ENCODE measurements at regions of chr3 and their contacts with region 1.

Region 1: DNA sequence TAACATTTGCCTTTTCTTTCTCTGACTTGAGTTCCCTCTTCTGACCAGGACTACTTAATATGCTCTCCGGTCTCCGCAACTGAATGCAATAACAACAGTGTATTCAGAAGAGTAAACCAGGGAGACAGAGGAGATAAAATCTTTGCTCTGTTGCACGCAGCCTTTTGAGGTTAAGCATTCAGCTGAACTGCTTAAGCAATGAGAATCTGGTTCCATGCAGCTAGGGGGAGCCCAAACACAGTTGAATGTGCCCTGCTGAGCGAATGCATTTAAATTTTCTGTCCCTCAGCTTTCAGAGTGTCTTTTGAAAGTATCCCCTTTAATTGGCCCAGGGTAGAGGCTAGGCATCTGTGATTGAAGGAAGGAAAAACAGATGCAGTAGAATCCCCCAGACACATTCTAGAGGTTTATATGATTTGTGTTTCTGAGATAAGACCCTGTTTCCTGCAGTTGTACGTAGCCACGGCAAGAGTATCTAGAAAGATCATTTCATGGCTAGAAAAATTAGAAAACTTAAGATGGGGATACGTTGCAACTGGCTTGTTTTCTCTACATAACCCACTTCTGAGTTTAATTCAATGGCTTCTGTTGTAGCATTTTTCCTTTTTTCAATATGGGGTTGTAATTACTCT is 309.6 kb downstream of the TUSC7 start:
- DNase-seq: no peak
- H3K4me3 ChIP-seq: no peak overlapping the region
- H3K27ac ChIP-seq: no peak overlapping the region
- H3K4me1 ChIP-seq: peaks cover 0 to 4% (median 0%) of the 10 kb centered on the region in 4 donors
- H3K27me3 ChIP-seq: no peaks in the 10 kb centered on the region
- CTCF ChIP-seq: peak; percentile 65 to 77 (median 70)
- EP300 ChIP-seq: no peak
- POLR2A ChIP-seq: no peak

Region 2: GRCh38 chr3:116770815-116771450 is 248.3 kb before region 1 on chr3:
- intact Hi-C with region 1: loop called (anchors 5 kb)
- DNase-seq: no peak
- H3K4me3 ChIP-seq: no peak overlapping the region
- H3K27ac ChIP-seq: no peak overlapping the region
- H3K4me1 ChIP-seq: no peaks in the 10 kb centered on the region
- H3K27me3 ChIP-seq: no peaks in the 10 kb centered on the region
- CTCF ChIP-seq: peak; percentile 75 to 87 (median 79)
- EP300 ChIP-seq: no peak
- POLR2A ChIP-seq: no peak

Region 3: GRCh38 chr3:116958291-116958690 is 60.9 kb before region 1 on chr3:
- intact Hi-C with region 1: no loop called
- DNase-seq: no peak
- H3K4me3 ChIP-seq: no peak overlapping the region
- H3K27ac ChIP-seq: no peak overlapping the region
- H3K4me1 ChIP-seq: peaks cover 0 to 5% (median 0%) of the 10 kb centered on the region in 4 donors
- H3K27me3 ChIP-seq: no peaks in the 10 kb centered on the region
- CTCF ChIP-seq: no peak
- EP300 ChIP-seq: no peak
- POLR2A ChIP-seq: no peak

Region 4: DNA sequence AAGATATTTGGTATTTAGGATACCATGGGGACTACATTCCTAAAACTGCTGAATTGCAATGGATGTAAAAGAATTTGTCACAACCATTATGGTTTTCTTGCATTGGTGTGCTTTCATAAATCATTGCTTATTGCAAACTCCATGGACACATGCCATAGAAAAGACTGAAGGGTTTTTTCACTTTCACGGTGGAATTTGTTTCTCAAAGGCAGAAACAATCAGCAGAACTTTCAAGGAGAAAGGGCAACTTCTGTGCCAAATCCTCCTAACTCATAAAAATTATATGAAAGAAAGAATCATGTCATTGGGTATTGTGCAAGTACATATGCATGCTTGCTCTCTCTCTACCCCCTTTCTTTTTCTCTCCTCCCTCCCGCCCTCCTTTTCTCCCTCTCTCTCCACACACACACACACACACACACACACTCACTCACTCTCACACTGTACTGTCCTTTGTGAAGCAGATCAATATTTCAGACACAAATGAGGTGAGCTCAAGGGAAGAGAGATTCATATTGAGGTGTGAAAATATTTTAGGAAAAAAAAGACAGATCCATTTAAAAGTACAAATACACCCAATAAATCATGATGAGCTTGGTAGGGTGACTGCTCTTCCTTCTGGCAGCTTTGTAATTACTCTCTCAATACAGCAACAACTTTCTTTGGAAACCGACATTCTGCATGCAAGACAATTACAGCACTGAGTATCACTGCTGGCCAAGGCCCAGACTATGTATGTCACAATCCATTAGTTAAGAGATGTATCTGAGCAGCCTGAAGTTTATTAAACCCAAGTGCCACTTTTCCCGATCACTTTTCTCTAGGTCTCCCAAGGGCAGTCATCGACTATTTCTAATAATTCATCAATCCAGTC is 182.9 kb after region 1 on chr3:
- intact Hi-C with region 1: no loop called
- DNase-seq: no peak
- H3K4me3 ChIP-seq: no peak overlapping the region
- H3K27ac ChIP-seq: no peak overlapping the region
- H3K4me1 ChIP-seq: no peaks in the 10 kb centered on the region
- H3K27me3 ChIP-seq: no peaks in the 10 kb centered on the region
- CTCF ChIP-seq: no peak
- EP300 ChIP-seq: no peak
- POLR2A ChIP-seq: no peak

Region 5: DNA sequence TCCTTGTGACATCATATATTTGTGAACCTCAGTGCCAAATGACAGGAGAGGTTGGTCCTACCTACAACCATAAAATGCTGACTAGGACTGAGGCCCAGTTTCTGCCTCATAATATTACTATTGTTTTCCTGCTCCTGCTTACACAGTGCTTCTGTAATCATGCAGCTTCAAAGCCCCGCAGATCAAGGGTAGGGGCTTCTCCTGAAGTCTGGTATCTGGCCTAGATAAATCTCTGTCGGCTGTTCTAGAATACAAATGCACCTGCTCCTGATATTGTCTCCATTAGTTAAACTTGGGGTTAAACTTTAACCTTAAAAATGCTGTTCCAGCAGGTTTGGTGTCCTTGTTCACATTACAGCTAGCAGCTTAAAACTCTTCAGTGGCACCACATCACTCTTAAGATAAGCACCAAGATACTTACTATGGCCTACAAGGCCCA is 242.8 kb after region 1 on chr3:
- intact Hi-C with region 1: no loop called
- DNase-seq: no peak
- H3K4me3 ChIP-seq: no peak overlapping the region
- H3K27ac ChIP-seq: no peak overlapping the region
- H3K4me1 ChIP-seq: no peaks in the 10 kb centered on the region
- H3K27me3 ChIP-seq: no peaks in the 10 kb centered on the region
- CTCF ChIP-seq: no peak
- EP300 ChIP-seq: no peak
- POLR2A ChIP-seq: no peak

Region 6: GRCh38 chr3:117355566-117355965 is 336.4 kb after region 1 on chr3:
- intact Hi-C with region 1: loop called (anchors 10 kb)
- DNase-seq: no peak
- H3K4me3 ChIP-seq: no peak overlapping the region
- H3K27ac ChIP-seq: no peak overlapping the region
- H3K4me1 ChIP-seq: no peaks in the 10 kb centered on the region
- H3K27me3 ChIP-seq: no peaks in the 10 kb centered on the region
- CTCF ChIP-seq: peak in 2 of 3 experiments; percentile 15 to 31
- EP300 ChIP-seq: no peak
- POLR2A ChIP-seq: no peak

Region 7: DNA sequence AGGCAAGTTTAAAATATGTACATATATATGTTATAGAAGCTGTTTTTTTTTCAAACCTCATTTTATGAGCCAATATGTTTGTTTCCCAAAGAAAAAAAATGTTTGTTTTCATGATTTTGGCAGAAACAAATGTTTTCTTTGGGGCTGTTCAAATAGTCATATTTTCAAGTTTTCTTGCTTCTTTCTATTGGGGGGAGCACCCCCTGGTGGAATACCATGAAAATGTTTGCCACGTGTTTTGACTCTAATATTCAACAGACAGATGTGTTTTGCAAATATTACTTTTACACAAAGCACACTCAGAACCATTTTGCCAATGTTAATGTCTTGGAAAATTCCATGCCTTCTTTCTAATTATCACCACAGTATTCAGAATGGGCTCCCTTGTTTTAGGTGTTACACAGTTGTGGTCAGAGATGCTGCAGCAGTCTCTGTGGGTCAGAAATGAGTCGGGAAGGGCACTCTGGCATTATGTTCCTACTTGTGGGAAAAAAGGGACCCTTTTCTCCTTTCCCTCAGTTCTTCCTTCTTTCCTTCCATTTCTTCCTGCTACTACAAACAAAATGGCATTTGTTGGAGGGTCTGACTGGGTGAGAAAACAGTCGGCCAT is 507.4 kb after region 1 on chr3:
- intact Hi-C with region 1: loop called (anchors 5 kb)
- DNase-seq: no peak
- H3K4me3 ChIP-seq: no peak overlapping the region
- H3K27ac ChIP-seq: no peak overlapping the region
- H3K4me1 ChIP-seq: peaks cover 0 to 8% (median 5%) of the 10 kb centered on the region in 4 donors
- H3K27me3 ChIP-seq: no peaks in the 10 kb centered on the region
- CTCF ChIP-seq: peak; percentile 20 to 51 (median 46)
- EP300 ChIP-seq: no peak
- POLR2A ChIP-seq: no peak

Region 8: GRCh38 chr3:117719316-117719926 is 700.2 kb after region 1 on chr3:
- intact Hi-C with region 1: loop called (anchors 10 kb)
- DNase-seq: no peak
- H3K4me3 ChIP-seq: no peak overlapping the region
- H3K27ac ChIP-seq: no peak overlapping the region
- H3K4me1 ChIP-seq: no peaks in the 10 kb centered on the region
- H3K27me3 ChIP-seq: no peaks in the 10 kb centered on the region
- CTCF ChIP-seq: peak; percentile 44 to 74 (median 60)
- EP300 ChIP-seq: no peak
- POLR2A ChIP-seq: no peak

Region 9: DNA sequence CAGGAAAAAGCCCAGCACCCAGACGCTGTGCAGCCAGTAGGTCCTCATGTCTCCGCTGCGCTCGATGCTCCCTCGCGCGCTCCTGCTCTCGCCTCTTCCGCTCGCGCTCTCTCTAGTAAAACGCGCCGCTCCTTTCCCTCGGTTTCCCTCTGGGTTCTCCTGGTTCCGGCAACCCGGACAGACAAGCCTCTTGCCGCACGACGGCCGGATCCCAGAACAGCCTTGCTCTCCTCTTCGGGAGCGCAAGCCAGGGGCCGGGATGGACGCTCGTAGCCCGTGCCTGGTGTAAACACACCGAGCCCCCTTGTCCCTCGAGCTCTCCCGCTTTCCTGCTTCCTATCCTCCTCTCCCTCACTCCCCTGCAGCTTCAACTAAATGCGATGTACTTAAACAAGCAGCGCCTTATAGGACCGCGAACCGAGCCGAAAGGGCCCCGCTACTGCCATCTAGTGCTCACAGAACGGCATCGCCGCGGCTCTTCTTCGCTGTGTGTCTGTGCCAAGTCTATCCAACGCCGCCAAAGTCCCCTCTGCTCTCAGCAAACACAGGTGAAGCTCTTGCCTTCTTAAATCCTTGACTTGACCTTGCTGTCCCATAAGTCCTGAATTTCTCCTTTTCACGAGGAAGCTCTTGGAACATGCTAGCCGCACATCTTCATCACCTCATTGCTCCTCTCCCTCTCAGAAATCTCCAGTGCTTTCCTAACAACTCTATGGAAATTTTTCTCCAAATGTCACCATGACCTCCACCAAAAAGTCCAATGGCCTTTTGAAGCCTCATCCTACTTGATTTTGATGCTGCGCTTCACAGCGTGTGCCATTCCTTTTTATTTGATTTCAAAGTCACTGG is 978.2 kb after region 1 on chr3:
- intact Hi-C with region 1: loop called (anchors 5 kb)
- DNase-seq: peak; percentile 93
- H3K4me3 ChIP-seq: peak overlapping the region; percentile 51 to 66 (median 52)
- H3K27ac ChIP-seq: peak overlapping the region in 1 of 4 donors; percentile 6
- H3K4me1 ChIP-seq: peaks cover 4 to 22% (median 13%) of the 10 kb centered on the region in 4 donors
- H3K27me3 ChIP-seq: peaks cover 0 to 34% (median 0%) of the 10 kb centered on the region in 4 donors
- CTCF ChIP-seq: peak; percentile 62 to 91 (median 67)
- EP300 ChIP-seq: no peak
- POLR2A ChIP-seq: no peak

Measured in esophagus muscularis mucosa (tissue), 4 donors.